ENCODE measurements at regions of chr12 and their contacts with region 1.

Region 1: GRCh38 chr12:54207484-54208294 is 18.9 kb upstream of the SMUG1 start:
- DNase-seq: peak; percentile 82
- ATAC-seq: peak; percentile 99
- H3K4me3 ChIP-seq: no peak overlapping the region
- H3K4me3 Mint-ChIP-seq: no peak overlapping the region
- H3K27ac ChIP-seq: no peak overlapping the region
- H3K27ac Mint-ChIP-seq: peak overlapping the region; percentile 67
- H3K4me1 ChIP-seq: peaks cover 0 to 4% of the 10 kb centered on the region in 2 donors
- H3K4me1 Mint-ChIP-seq: peaks cover 4% of the 10 kb centered on the region
- H3K27me3 ChIP-seq: peaks cover 0 to 70% (median 6%) of the 10 kb centered on the region in 4 experiments
- H3K27me3 Mint-ChIP-seq: peaks cover 44% of the 10 kb centered on the region
- CTCF ChIP-seq: peak; percentile 95

Region 2: DNA sequence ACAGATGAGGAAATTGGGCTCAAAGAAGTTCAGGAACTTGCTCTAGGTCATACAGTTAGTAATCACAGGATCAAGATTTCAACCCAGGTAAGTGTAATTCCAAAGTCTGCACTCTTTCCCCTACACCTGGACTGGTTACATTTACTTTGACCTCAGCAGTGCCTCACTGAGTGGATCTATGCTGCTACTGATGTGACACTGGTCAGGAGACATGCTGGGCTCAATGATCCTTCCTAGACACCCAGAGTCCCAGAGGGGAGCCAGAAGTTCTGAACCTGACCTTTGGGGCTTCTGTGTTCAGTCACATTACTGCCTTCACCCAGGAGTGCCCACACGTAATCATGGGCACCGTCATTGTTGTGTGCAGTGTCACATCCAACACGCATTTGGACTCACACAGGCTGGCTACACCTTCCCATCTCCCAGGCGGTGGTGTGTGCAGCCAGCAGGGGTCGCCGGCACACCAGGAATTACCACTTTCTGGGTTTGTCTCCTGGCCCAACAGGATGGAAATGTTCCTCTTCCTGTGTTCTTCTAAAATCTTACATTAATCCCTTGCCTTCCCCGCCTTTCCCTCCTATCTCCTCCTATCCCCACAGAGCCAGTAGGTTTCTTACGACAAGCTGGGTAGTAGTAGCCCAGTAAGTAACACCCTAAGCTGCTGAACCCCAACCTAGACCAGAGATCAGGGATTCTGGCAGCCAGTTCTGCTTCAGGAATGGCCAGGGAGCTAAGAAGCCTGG is 506.0 kb before region 1 on chr12:
- CTCF ChIA-PET with region 1: no interaction called
- POLR2A ChIA-PET with region 1: no interaction called
- intact Hi-C with region 1: loop called (anchors 5 kb)
- DNase-seq: peak; percentile 77
- ATAC-seq: peak; percentile 81
- H3K4me3 ChIP-seq: no peak overlapping the region
- H3K4me3 Mint-ChIP-seq: no peak overlapping the region
- H3K27ac ChIP-seq: no peak overlapping the region
- H3K27ac Mint-ChIP-seq: no peak overlapping the region
- H3K4me1 ChIP-seq: peaks cover 5 to 9% of the 10 kb centered on the region in 2 donors
- H3K4me1 Mint-ChIP-seq: peaks cover 7% of the 10 kb centered on the region
- H3K27me3 ChIP-seq: peaks cover 0 to 55% (median 43%) of the 10 kb centered on the region in 4 experiments
- H3K27me3 Mint-ChIP-seq: peaks cover 74% of the 10 kb centered on the region
- CTCF ChIP-seq: peak; percentile 87

Region 3: DNA sequence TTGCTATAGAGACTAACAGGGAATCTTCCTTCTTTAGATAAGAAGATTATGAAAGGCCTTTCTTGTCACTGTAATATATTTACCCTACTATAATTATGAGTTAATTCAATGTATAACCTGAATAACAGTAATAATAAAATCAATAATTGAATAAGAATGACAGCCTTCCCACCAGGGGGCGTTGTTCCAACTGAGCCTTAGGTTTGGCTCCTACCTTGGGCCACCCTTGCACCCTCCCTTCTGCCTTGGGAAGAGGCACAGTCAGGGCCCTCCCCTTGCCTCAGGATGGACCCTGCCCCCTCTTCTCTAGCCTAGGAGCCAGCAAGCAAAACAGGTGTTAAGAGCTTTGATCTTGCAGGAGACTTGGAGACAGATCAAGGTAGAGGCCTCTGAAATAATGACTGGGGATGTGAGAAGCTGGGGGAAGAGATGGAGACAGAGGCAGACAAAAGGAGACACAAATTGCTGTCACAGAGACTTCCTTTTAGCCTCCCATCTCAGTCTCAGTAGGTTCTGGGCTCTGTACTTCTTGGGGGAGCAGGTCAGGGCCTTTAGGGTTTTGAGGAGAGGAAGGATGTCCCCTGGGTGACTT is 415.9 kb before region 1 on chr12:
- CTCF ChIA-PET with region 1: interaction called, 5 read pairs
- POLR2A ChIA-PET with region 1: no interaction called
- intact Hi-C with region 1: loop called (anchors 5 kb)
- DNase-seq: peak; percentile 41
- ATAC-seq: no peak
- H3K4me3 ChIP-seq: no peak overlapping the region
- H3K4me3 Mint-ChIP-seq: no peak overlapping the region
- H3K27ac ChIP-seq: no peak overlapping the region
- H3K27ac Mint-ChIP-seq: no peak overlapping the region
- H3K4me1 ChIP-seq: no peaks in the 10 kb centered on the region
- H3K4me1 Mint-ChIP-seq: no peaks in the 10 kb centered on the region
- H3K27me3 ChIP-seq: peaks cover 0 to 27% (median 8%) of the 10 kb centered on the region in 4 experiments
- H3K27me3 Mint-ChIP-seq: peaks cover 17% of the 10 kb centered on the region
- CTCF ChIP-seq: peak; percentile 72

Region 4: GRCh38 chr12:53995378-53996239 is 212.1 kb before region 1 on chr12:
- CTCF ChIA-PET with region 1: interaction called, 17 read pairs
- POLR2A ChIA-PET with region 1: no interaction called
- intact Hi-C with region 1: no loop called
- DNase-seq: peak; percentile 62
- ATAC-seq: peak; percentile 43
- H3K4me3 ChIP-seq: peak overlapping the region in 4 of 5 experiments; percentile 44 to 60 (median 58)
- H3K4me3 Mint-ChIP-seq: peak overlapping the region; percentile 89
- H3K27ac ChIP-seq: no peak overlapping the region
- H3K27ac Mint-ChIP-seq: peak overlapping the region; percentile 47
- H3K4me1 ChIP-seq: peaks cover 37 to 70% of the 10 kb centered on the region in 2 donors
- H3K4me1 Mint-ChIP-seq: peaks cover 35% of the 10 kb centered on the region
- H3K27me3 ChIP-seq: peaks cover 0 to 98% (median 84%) of the 10 kb centered on the region in 4 experiments
- H3K27me3 Mint-ChIP-seq: peaks cover 87% of the 10 kb centered on the region
- CTCF ChIP-seq: no peak

Region 5: DNA sequence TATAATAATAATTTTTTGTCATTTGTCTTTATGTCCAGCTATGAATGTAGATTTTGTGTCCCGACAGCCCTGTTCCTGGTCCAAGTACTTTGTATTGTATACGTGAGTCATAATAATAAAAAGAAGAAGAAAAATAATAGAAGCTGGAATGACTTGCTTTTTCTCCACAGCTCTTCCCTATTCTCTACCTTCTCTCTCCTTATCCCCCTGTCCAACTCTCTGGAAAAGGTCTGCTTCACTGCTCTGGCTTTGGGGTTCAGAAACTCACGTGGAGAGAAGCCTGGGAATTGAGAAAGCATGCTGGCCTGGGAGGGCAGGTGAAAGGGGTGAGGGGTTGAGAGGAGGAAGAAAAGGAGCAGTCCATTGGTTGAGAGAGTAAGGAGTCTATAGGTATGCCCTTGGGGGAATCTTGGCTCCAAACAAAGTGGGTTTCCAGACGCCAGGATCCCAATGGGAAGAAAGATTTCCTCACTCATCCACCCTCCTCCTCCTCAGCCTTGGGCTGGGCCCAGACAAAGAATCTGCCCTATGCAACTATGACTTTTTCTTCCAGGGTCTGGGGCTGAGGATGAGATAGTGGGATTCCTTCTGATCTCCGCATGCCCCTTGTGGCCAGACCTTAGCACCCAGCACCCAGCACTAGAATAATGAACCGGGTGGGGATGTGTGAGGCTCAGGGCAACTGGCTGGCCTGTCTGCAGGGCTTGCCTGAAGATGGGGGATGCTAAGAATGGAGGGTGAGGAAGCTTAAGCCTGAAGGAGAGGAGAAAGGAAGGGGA is 194.9 kb before region 1 on chr12:
- CTCF ChIA-PET with region 1: interaction called, 159 read pairs
- POLR2A ChIA-PET with region 1: interaction called, 5 read pairs
- intact Hi-C with region 1: no loop called
- DNase-seq: no peak
- ATAC-seq: no peak
- H3K4me3 ChIP-seq: no peak overlapping the region
- H3K4me3 Mint-ChIP-seq: no peak overlapping the region
- H3K27ac ChIP-seq: no peak overlapping the region
- H3K27ac Mint-ChIP-seq: no peak overlapping the region
- H3K4me1 ChIP-seq: peaks cover 29 to 50% of the 10 kb centered on the region in 2 donors
- H3K4me1 Mint-ChIP-seq: peaks cover 27% of the 10 kb centered on the region
- H3K27me3 ChIP-seq: peaks cover 0 to 91% (median 80%) of the 10 kb centered on the region in 4 experiments
- H3K27me3 Mint-ChIP-seq: peaks cover 73% of the 10 kb centered on the region
- CTCF ChIP-seq: no peak

Region 6: GRCh38 chr12:54053751-54054741 is 153.6 kb before region 1 on chr12 and contains the start of gene HOXC4:
- CTCF ChIA-PET with region 1: interaction called, 16 read pairs
- POLR2A ChIA-PET with region 1: no interaction called
- intact Hi-C with region 1: no loop called
- DNase-seq: peak; percentile 36
- ATAC-seq: peak; percentile 66
- H3K4me3 ChIP-seq: peak within 1 kb of the TSS in 4 of 5 experiments; percentile 69 to 78 (median 75)
- H3K4me3 Mint-ChIP-seq: peak within 1 kb of the TSS; percentile 91
- H3K27ac ChIP-seq: peak within 1 kb of the TSS; percentile 83 to 88
- H3K27ac Mint-ChIP-seq: peak within 1 kb of the TSS; percentile 95
- H3K4me1 ChIP-seq: peaks cover 36 to 42% of the 10 kb centered on the region in 2 donors
- H3K4me1 Mint-ChIP-seq: peaks cover 43% of the 10 kb centered on the region
- H3K27me3 ChIP-seq: peaks cover 0 to 63% (median 39%) of the 10 kb centered on the region in 4 experiments
- H3K27me3 Mint-ChIP-seq: peaks cover 56% of the 10 kb centered on the region
- CTCF ChIP-seq: no peak
- total RNA-seq, gene HOXC4: 6.4 and 6.5 TPM in 2 replicates

Region 7: GRCh38 chr12:54191550-54192022 is 16.1 kb before region 1 on chr12:
- CTCF ChIA-PET with region 1: interaction called, 118 read pairs
- POLR2A ChIA-PET with region 1: no interaction called
- intact Hi-C with region 1: loop called (anchors 2 kb)
- DNase-seq: peak; percentile 90
- ATAC-seq: peak; percentile 64
- H3K4me3 ChIP-seq: no peak overlapping the region
- H3K4me3 Mint-ChIP-seq: no peak overlapping the region
- H3K27ac ChIP-seq: no peak overlapping the region
- H3K27ac Mint-ChIP-seq: peak overlapping the region; percentile 61
- H3K4me1 ChIP-seq: peaks cover 27 to 42% of the 10 kb centered on the region in 2 donors
- H3K4me1 Mint-ChIP-seq: peaks cover 41% of the 10 kb centered on the region
- H3K27me3 ChIP-seq: peaks cover 0 to 42% (median 12%) of the 10 kb centered on the region in 4 experiments
- H3K27me3 Mint-ChIP-seq: peaks cover 35% of the 10 kb centered on the region
- CTCF ChIP-seq: peak; percentile 77

Measured in B cell (primary cell).